Posterior cingulate gyrus (tissue), 11 donors: ENCODE measurements at regions of chr21 and their contacts with region 1.

Region 1: GRCh38 chr21:39388038-39388810 is 39.3 kb upstream of the HMGN1 start:
- DNase-seq: peak; percentile 81 to 98 (median 94)

Region 2: DNA sequence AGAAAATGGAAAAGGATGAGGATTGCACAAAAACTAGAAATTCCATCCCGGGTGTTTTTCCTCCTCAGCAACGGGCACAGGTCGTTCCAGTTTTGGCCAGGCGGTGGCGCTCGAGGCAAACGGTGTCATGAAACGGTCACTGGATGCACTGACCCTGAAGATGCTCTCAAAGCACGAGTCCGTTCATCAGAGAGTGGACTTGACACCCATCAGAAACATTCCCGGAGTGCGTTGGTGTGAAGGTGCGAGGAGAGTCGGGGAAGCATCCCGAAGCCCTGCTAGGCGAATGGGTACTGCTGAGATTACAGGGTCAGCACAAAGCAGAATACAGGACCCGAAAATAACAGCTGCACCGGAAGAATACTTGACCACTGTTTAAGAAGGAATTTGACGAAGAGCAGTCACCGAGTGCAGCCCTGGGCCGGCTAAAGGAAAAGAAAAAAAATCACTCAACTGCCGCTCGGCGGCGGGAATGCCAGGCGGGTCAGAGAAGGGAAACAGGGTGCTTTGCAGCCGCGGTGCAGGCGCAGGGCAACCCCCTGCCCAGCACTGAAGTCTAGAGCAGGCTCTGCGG is 654.2 kb before region 1 on chr21:
- intact Hi-C with region 1: loop called (anchors 2 kb)
- DNase-seq: peak; percentile 70 to 97 (median 90)

Region 3: GRCh38 chr21:39183237-39184007 is 204.8 kb before region 1 on chr21 and contains the start of gene PSMG1:
- intact Hi-C with region 1: loop called (anchors 5 kb)
- DNase-seq: peak; percentile 82 to 99 (median 90)

Region 4: DNA sequence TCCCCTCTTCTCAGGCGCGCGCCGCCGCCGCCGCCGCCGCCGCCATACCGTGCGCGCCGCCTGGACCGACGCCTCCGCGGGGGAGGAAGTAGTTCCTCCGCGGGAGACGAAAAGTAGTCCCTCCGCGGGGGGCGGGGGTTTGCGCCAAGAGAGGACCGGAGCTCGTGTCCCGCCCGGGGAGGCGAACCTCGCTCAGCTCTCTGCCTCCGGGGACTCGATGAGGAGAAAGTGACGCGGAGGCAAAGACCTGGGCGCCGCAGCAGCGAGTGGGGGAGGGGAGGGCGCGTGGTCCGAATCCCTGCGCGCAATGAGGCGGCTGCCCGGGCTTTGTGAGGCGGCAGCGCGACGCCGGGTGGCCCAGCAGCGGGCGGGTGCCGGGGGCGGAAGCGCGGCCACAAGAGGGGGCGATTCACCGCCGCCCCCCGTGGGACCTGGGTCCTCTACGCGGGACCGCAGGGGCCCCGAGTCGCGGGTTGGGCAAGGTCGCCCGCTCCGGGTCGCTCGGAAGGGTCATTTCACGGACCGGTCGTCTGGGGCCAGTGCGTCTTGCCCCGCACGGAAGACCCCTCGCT is 74.6 kb before region 1 on chr21 and contains the start of gene BRWD1:
- intact Hi-C with region 1: loop called (anchors 1 kb)
- DNase-seq: peak; percentile 61 to 96 (median 71)

Region 5: DNA sequence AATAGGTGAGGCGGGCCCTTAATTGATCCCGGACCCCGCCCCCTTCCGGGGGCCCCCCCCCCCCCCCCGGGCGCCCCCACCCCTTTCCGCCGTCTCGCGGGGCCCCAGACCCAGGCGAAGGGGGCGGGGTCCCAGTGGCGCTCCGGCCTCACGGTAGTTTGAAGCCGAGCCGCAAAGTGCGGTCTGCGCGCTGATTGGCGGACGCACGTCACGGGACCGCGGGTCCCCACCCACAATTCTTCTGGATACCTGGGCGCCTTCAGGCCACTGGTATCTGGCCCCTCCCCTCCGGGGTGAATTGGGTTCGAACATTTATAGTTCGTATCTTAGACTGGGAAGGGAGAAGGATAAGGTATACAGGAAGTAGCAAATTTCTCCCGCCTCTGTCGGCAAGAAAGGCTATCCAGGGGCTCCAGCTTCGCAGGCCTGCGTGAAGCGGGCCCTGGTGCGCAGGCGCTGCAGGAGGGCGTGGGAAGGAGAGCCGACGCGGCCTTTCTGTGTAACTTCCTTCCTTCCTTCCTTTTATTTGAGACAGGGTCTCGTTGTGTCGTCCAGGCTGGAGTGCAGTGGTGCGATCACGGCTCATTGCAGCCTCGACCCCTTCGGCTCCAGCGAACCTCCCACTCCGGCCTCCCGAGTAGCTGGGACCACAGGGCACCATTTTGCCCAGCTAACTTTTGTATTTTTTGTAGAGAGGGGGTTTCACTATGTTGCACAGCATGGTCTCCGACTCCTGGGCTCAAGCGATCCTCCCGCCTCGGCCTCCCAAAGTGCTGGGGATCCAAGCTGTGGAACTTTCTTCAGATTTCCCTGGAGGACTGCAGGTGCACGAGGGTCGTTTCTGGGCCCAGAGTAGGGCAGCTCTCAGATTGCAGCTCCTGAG is 38.8 kb before region 1 on chr21:
- intact Hi-C with region 1: loop called (anchors 1 kb)
- DNase-seq: peak; percentile 94 to 99 (median 96)

Region 6: DNA sequence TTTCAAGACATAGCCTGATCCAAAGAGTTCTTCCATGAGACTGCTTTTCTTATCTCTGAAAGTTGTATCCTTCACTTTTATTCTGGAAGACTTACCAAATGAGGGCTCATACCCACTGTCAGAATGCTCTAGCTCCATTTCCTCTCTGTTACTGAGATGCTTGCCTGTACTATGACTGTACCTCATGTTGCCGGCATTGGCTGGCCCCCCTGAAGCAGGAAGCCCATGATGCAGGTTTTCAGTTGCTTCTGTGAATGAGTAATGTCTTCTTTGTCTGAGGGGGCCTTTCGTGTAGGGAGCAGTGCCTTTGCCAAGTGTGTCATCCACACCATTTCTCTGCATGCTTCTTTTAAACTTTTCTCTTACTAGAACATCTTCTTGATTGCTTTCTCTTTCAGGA is 17.8 kb after region 1 on chr21:
- intact Hi-C with region 1: no loop called
- DNase-seq: no peak

Region 7: DNA sequence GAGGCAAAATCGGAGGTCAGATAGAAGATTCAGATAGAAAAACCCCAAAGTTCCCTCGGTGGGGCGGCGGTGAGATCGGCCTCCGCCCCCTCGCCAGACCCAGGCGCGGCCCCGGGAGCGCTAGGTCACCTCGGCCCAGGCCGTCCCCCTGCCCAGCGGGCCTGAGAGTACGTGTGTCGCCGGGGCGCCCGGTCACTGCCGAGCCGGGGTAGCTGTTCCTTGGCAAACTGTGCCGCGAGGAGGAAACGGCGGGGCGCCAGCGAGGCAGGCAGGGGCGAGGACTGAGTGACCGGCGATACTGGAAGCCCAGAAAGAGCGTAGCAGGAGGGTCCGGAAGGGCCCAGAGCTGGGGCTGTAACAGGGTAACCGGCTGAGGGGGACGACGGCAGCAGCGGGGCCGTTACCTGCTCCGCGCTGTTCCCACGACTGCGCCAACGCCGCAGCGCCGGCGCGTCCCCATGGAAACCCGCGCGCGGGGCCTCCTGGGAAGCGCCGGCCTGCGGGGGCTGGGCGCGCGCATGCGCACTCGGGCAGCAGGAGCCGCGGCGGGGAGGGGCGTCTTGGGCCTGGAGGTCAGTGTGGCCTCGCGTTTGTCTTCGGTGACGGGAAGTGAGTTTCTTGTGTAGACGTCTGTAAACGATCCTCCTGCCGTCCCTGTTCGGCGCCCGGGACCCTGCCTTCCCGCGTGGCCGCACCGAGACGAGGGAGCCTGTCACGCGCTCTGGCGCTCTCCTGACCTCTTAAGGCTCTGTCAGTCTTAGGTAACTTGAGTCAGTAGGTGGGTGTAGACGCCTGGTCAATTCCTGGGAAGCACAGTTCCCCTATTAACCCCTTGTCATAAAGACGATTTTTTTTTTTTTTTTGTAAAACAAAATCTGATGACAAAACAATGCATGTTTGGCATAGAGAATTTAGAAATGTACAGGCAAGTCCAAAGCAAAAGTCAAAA is 57.4 kb after region 1 on chr21 and contains the start of gene LCA5L:
- intact Hi-C with region 1: loop called (anchors 5 kb)
- DNase-seq: peak; percentile 73 to 97 (median 80)

Region 8: DNA sequence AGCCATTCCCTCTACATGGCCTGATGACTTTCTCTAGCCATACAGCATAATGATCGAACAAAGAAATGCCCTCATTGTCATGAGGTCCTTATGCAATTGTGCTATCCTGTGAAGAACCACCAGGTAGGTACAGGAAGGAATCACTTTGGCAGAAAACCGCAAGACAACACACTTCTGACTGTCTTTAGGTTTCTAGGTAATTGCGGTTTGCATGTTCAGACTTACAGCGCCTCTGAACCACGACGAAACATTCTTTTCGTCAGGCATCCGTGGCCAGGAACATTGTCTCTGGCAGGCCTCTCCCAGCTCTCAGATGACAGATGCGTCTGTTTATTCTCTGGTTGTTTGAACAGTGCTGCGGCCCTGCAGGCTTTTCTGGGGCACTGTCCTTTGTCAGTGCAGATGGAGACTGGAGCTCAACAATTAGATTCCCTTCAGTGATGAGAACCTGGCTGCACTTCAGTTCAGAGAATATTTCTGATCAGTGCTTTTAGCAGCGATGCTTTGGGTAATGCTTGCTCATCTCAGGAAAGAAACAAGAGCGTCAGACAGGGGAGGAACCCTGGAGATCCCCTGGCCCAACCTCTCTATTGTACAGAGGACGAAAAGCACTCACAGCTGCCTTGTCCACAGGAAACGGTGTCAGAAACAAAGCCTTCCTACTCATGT is 287.9 kb after region 1 on chr21:
- intact Hi-C with region 1: no loop called
- DNase-seq: peak in 1 of 10 donors; percentile 68